ENCODE measurements at regions of chr17 and their contacts with region 1.

Region 1: DNA sequence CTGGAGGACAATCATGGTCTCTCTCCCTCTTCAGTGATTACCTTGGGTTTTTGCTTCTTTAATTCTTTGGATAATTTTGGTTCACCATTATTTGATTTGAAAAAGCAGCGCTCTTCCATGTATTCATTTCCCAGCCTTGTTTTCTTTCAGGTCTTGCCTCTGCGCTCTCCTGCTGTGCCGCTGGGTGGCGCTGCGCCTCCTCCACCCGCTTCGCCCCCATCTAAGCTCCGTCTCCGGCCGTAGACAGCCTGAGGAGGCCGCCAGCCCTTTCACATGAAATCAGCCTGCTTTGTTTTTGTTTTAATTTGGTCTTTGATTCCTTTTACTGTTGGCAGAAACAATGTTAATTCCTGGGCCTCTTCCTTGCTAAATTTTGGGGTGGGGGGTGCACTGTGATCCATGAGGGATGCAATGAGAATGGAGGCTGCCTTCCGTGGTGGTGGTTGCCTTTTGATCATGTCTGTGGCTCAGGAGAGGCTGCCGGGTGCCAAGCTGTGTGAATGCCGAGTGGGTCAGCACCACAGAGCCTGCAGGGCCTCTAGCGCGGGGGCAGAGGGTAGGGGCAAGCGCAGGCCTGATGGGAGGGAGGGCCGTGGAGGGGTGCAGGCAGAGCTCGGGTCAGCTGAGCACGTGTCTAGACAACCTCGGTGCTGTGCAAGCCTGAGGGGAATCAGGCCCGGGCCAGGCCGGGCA is 64.1 kb downstream of the PLD6 start:
- DNase-seq: peak; percentile 63
- H3K4me3 Mint-ChIP-seq: no peak overlapping the region
- H3K27ac Mint-ChIP-seq: no peak overlapping the region
- H3K4me1 Mint-ChIP-seq: peaks cover 6% of the 10 kb centered on the region
- H3K27me3 Mint-ChIP-seq: no peaks in the 10 kb centered on the region

Region 2: DNA sequence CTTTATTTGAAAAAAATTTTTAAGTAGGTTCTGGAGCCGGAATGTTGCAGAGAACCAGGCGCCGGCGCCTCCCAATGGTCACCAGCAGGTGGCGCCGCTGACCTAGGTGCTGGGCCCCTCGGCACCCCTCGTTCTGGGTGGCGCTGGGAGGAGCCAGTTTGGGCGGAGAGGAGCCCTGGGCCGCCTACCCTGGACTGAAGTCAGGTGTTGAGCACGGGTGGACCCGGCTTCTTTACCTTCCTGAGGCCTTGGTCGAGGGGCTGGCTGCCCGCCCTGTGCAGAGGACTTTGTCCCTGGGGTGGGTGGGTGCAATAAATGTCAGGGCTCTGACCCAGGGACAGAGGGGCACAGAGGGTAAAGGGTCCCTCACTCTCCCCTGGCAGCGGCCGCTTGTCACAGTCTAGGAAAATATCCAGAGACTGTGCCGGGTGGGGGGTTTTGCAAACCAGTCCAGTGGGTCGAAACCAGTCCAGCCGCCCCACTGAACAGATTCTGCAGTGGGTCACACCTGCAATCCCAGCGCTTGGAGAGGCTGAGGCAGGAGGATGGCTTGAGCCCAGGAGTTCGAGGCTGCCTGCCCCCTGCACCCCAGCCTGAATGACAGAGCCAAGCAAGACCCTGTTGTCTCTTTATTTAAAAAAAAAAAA is 140.0 kb before region 1 on chr17:
- CTCF ChIA-PET with region 1: no interaction called
- intact Hi-C with region 1: loop called (anchors 1 kb)
- DNase-seq: peak; percentile 75
- H3K4me3 Mint-ChIP-seq: no peak overlapping the region
- H3K27ac Mint-ChIP-seq: no peak overlapping the region
- H3K4me1 Mint-ChIP-seq: no peaks in the 10 kb centered on the region
- H3K27me3 Mint-ChIP-seq: no peaks in the 10 kb centered on the region

Region 3: DNA sequence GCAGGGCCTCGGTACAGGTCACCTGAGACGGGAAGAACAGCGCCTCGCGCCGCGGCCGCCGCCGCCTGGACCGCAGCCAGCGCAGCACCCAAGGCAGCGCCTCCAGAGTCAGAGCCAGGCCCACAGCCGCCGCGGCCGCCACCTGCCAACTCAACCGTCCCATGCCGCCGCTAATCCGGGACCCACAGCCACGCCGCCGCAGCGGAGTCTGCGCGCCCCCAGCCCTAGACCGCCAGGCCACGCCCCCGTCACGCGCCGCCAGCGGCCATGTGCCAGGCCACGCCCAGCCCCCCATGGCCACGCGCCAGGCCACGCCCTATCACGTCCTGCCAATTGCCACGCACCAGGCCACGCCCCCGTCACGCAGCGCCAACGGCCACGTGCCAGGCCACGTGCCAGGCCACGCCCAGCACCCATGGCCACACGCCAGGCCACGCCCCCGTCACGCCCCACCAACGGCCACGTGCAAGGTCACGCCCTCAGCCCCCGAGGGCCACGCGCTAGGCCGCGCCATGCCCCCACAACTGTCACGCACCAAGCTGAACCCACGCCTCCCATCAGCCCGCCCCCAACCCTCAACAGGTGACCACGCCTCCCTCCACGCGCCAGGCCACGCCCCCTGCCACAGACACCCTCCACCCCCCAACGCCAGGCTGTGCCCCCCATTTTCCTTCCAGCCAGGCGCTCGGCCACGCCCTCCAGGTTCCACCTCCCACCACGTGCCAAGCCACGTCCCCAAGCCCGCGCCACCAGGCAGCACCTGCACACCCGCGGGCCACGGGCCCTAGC is 64.3 kb after region 1 on chr17 and contains the start of gene PLD6:
- CTCF ChIA-PET with region 1: interaction called, 4 read pairs
- intact Hi-C with region 1: loop called (anchors 1 kb)
- DNase-seq: peak; percentile 88
- H3K4me3 Mint-ChIP-seq: peak within 1 kb of the TSS; percentile 94
- H3K27ac Mint-ChIP-seq: peak within 1 kb of the TSS; percentile 90
- H3K4me1 Mint-ChIP-seq: peaks cover 27% of the 10 kb centered on the region
- H3K27me3 Mint-ChIP-seq: no peaks in the 10 kb centered on the region
- total RNA-seq, gene PLD6: 5.3 to 5.4 TPM

Region 4: GRCh38 chr17:17313350-17313991 is 171.5 kb after region 1 on chr17:
- CTCF ChIA-PET with region 1: interaction called, 12 read pairs
- intact Hi-C with region 1: loop called (anchors 1 kb)
- DNase-seq: peak; percentile 84
- H3K4me3 Mint-ChIP-seq: no peak overlapping the region
- H3K27ac Mint-ChIP-seq: no peak overlapping the region
- H3K4me1 Mint-ChIP-seq: peaks cover 6% of the 10 kb centered on the region
- H3K27me3 Mint-ChIP-seq: no peaks in the 10 kb centered on the region